B cell (primary cell): ENCODE measurements at regions of chr17 and their contacts with region 1.

Region 1: DNA sequence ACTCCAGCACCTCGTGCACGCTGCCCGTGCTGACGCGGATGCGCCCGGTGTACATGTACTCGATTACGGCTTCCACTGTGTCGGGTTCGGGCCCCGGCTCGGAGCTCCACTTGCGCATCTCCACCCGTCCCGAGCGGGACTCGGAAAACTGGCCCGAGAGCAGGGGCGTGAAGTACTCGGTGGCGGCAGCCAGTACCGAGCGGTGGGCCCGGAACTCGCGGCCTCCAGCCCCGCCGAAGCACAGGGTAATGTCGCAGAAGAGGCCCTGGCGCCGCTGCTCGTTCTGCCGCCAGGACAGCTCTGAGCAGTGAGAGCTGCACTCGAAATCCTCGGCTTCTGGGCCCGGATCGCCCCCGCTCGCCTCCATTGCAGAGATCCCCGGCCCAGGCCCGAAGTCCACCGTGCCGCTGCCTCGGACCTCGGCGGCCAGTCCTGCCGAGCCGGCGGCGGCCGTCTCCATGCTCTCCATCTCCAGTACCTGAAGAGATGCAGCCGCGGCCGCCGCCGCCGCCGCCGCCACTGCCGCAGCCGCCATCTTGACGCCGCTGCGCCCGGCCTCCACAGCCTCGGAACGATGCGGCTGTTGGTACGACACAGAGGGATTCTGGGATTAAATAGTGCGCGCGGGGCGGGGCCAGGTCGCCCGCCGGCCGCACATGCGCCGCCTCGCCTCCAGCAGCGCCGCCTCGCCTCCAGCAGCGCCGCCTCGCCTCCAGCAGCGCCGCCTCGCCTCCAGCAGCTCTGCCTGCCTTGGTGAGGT is at the start of gene KLHL11:
- DNase-seq: peak; percentile 93
- ATAC-seq: peak; percentile 97
- H3K4me3 ChIP-seq: peak within 1 kb of the TSS; percentile 45 to 96 (median 83)
- H3K4me3 Mint-ChIP-seq: no peak within 1 kb of the TSS
- H3K27ac ChIP-seq: peak within 1 kb of the TSS; percentile 72 to 82
- H3K27ac Mint-ChIP-seq: no peak within 1 kb of the TSS
- H3K4me1 ChIP-seq: peaks cover 24 to 27% of the 10 kb centered on the region in 2 donors
- H3K4me1 Mint-ChIP-seq: peaks cover 22% of the 10 kb centered on the region
- H3K27me3 ChIP-seq: no peaks in the 10 kb centered on the region
- H3K27me3 Mint-ChIP-seq: no peaks in the 10 kb centered on the region
- CTCF ChIP-seq: no peak
- total RNA-seq, gene KLHL11: 18.7 and 18.8 TPM in 2 replicates

Region 2: DNA sequence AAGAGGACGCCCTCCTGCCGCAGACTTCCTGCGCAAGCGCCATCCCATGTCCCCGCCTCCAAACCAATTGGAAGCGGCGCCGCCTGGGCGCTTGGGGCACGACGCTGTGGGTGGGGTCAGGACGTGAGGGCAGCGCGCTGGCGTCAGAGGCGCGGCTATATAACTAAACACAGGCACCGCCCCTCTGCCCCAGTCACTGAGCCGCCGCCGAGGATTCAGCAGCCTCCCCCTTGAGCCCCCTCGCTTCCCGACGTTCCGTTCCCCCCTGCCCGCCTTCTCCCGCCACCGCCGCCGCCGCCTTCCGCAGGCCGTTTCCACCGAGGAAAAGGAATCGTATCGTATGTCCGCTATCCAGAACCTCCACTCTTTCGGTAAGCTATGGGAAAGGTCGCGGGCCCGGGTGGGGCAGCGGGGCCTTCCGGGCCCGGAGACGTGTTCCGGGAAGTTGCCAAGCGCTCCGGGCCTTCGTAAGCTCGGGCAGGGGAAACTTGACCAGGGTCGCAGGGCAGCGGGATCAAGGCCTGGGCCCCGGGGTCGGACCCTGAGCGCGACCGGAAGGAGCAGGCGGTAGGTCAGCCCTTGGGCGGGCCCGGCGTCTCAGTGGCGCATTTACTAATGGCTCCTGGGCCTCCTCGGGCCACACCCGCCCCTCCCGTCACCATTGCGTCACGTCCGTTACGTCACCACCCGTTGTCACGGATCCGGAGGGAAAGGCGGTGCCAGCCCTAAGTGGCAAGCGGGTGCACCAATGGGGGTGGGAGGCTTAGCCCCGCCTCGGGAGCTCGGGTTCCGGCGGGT is 176.1 kb before region 1 on chr17 and contains the start of gene EIF1:
- CTCF ChIA-PET with region 1: no interaction called
- POLR2A ChIA-PET with region 1: interaction called, 13 read pairs
- intact Hi-C with region 1: no loop called
- DNase-seq: peak; percentile 100
- ATAC-seq: peak; percentile 75
- H3K4me3 ChIP-seq: peak within 1 kb of the TSS; percentile 81 to 99 (median 87)
- H3K4me3 Mint-ChIP-seq: peak within 1 kb of the TSS; percentile 96
- H3K27ac ChIP-seq: peak within 1 kb of the TSS; percentile 99
- H3K27ac Mint-ChIP-seq: peak within 1 kb of the TSS; percentile 100
- H3K4me1 ChIP-seq: peaks cover 22 to 27% of the 10 kb centered on the region in 2 donors
- H3K4me1 Mint-ChIP-seq: peaks cover 38% of the 10 kb centered on the region
- H3K27me3 ChIP-seq: no peaks in the 10 kb centered on the region
- H3K27me3 Mint-ChIP-seq: no peaks in the 10 kb centered on the region
- CTCF ChIP-seq: no peak
- total RNA-seq, gene EIF1: 753 and 773 TPM in 2 replicates

Region 3: GRCh38 chr17:41777574-41778188 is 87.3 kb before region 1 on chr17:
- CTCF ChIA-PET with region 1: no interaction called
- POLR2A ChIA-PET with region 1: no interaction called
- intact Hi-C with region 1: no loop called
- DNase-seq: no peak
- ATAC-seq: no peak
- H3K4me3 ChIP-seq: no peak overlapping the region
- H3K4me3 Mint-ChIP-seq: no peak overlapping the region
- H3K27ac ChIP-seq: no peak overlapping the region
- H3K27ac Mint-ChIP-seq: no peak overlapping the region
- H3K4me1 ChIP-seq: peaks cover 4 to 62% of the 10 kb centered on the region in 2 donors
- H3K4me1 Mint-ChIP-seq: peaks cover 21% of the 10 kb centered on the region
- H3K27me3 ChIP-seq: no peaks in the 10 kb centered on the region
- H3K27me3 Mint-ChIP-seq: no peaks in the 10 kb centered on the region
- CTCF ChIP-seq: no peak

Region 4: DNA sequence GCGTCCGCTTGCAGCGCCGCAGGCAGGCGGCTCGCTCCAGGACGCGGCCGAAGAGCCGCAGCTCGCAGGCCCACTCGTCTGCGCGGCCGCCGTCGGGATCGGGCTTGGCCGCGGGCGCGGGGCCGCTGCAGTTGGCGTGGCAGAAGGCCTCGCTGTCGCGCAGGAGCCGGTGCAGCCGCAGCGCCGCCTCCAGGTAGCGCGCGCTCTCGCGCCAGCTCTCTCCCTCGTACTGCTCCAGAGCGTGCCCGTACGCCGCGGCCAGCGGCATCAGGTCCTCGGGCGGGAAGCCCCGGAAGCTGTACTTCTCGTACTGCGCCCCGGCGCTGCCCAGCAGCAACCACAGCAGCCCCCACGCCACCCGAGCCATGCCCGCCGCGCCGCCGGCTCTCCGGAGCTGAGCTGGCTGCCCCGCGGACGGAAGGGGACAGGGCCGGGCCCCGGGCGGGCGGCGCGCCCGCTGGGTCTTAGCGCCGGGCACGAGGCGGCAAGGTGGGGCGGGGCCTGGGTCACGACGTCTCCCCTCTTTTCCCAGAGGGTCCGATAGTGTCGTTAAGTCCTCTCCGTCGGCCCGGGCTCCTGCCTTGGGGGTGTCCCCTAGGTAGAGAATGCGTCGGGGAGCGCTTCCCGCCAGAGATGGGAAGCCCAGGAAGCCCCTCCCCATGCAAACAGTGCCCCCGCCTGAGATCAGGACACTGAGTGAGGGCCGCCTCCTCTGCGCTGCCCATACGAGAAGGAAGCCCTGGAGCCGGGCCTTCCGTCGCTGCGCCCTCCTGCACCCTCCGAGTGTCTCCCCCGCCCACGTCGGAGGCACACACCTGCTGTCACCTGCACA is 53.3 kb before region 1 on chr17 and contains the start of gene P3H4:
- CTCF ChIA-PET with region 1: interaction called, 4 read pairs
- POLR2A ChIA-PET with region 1: no interaction called
- intact Hi-C with region 1: loop called (anchors 1 kb)
- DNase-seq: peak; percentile 88
- ATAC-seq: peak; percentile 91
- H3K4me3 ChIP-seq: peak within 1 kb of the TSS; percentile 23 to 85 (median 60)
- H3K4me3 Mint-ChIP-seq: peak within 1 kb of the TSS; percentile 96
- H3K27ac ChIP-seq: no peak within 1 kb of the TSS
- H3K27ac Mint-ChIP-seq: peak within 1 kb of the TSS; percentile 83
- H3K4me1 ChIP-seq: peaks cover 20% of the 10 kb centered on the region in 2 donors
- H3K4me1 Mint-ChIP-seq: peaks cover 19% of the 10 kb centered on the region
- H3K27me3 ChIP-seq: peaks cover 0 to 25% (median 5%) of the 10 kb centered on the region in 4 experiments
- H3K27me3 Mint-ChIP-seq: peaks cover 6% of the 10 kb centered on the region
- CTCF ChIP-seq: peak; percentile 82
- total RNA-seq, gene P3H4: 2.5 and 2.8 TPM in 2 replicates

Region 5: GRCh38 chr17:41835800-41836549 is 29.0 kb before region 1 on chr17 and contains the start of gene NT5C3B:
- CTCF ChIA-PET with region 1: interaction called, 3 read pairs
- POLR2A ChIA-PET with region 1: interaction called, 3 read pairs
- intact Hi-C with region 1: loop called (anchors 1 kb)
- DNase-seq: peak; percentile 72
- ATAC-seq: peak; percentile 86
- H3K4me3 ChIP-seq: peak within 1 kb of the TSS; percentile 21 to 80 (median 67)
- H3K4me3 Mint-ChIP-seq: peak within 1 kb of the TSS; percentile 92
- H3K27ac ChIP-seq: peak within 1 kb of the TSS in 1 of 2 donors; percentile 62
- H3K27ac Mint-ChIP-seq: peak within 1 kb of the TSS; percentile 85
- H3K4me1 ChIP-seq: peaks cover 12 to 14% of the 10 kb centered on the region in 2 donors
- H3K4me1 Mint-ChIP-seq: peaks cover 13% of the 10 kb centered on the region
- H3K27me3 ChIP-seq: peaks cover 0 to 13% (median 0%) of the 10 kb centered on the region in 4 experiments
- H3K27me3 Mint-ChIP-seq: no peaks in the 10 kb centered on the region
- CTCF ChIP-seq: no peak
- total RNA-seq, gene NT5C3B: 46.5 and 49.6 TPM in 2 replicates

Region 6: DNA sequence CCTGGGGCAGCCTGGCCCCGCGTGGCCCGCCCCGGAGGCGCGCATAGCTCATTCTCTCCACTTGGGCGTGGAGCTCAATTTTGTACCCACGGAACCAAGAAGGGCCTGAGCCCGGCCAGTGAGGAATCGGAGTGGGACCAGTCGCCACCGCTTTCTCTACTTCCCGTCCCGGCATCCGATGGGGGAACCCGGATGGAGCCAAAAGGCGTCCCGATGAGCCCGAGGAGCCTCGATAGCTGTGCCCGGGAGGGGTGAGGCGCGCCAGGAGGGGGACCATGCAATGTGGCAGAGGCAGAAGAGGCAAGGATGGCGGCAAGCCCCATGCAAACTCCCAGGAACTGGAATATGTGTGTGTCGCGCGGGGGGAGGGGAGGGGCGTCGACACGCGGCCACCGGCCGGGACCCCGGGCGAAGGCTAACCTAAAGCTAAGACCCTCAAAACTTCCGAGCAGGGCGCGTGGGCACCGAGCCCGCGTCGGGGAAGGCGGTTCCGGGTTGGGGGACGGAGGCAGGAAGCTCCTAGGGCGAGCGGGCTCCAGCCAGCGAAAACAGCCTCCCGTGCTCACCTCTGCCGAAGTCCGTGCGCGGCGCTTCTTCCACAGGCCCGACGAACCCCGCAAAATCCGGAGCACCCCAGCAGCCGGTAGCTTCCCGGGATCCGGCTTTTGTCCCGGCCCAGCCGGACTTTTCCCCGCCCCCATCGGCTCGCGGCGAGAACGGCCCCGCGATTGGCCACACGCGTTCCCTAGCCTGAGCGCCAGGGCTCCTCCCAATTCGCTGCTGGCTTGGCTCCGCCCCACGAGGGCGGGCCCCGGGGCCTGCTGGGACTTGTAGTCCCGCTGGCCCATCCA is 53.5 kb after region 1 on chr17 and contains the start of gene ACLY:
- CTCF ChIA-PET with region 1: no interaction called
- POLR2A ChIA-PET with region 1: no interaction called
- intact Hi-C with region 1: loop called (anchors 1 kb)
- DNase-seq: peak; percentile 95
- ATAC-seq: peak; percentile 99
- H3K4me3 ChIP-seq: peak within 1 kb of the TSS; percentile 78 to 99 (median 98)
- H3K4me3 Mint-ChIP-seq: peak within 1 kb of the TSS; percentile 91
- H3K27ac ChIP-seq: peak within 1 kb of the TSS; percentile 62 to 81
- H3K27ac Mint-ChIP-seq: peak within 1 kb of the TSS; percentile 89
- H3K4me1 ChIP-seq: peaks cover 15 to 21% of the 10 kb centered on the region in 2 donors
- H3K4me1 Mint-ChIP-seq: peaks cover 40% of the 10 kb centered on the region
- H3K27me3 ChIP-seq: no peaks in the 10 kb centered on the region
- H3K27me3 Mint-ChIP-seq: no peaks in the 10 kb centered on the region
- CTCF ChIP-seq: no peak
- total RNA-seq, gene ACLY: 85.3 and 91.5 TPM in 2 replicates

Region 7: DNA sequence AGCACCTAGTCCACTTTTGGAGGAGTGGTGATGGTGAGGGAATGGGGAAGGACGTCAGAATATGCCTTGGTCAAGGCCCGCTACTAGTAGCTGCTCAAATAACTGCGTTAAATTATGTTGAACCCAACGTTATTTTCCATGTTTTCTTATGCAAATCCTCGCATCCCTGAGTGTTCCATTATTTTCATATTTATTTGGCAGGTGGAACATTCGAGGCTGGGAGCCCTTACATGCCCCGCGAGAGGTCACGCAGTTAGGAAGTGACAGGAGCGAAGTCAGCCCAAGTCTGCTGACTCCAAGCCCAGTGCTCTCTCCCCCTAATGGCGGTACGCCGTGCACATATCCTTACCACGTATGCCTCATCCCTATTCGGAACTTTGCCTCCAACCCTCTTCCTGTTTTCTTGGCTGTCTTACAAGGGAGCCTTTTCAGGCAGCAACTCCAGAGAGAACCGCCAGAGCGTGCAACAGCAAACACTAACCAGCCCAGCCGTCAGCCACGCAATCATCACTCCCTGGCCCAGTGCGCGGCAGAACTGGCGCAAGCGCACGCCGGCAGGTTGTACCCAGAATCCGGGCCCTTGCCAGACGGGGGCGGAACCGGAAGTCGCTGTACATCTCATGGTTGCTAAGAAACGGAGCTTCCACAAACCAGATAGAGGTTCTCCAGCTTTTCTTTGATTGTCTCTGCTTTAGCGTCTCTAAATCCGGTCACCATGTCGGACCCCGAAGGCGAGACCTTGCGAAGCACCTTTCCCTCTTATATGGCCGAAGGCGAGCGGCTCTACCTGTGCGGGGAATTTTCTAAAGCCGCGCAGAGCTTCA is 65.2 kb after region 1 on chr17 and contains the start of gene ODAD4:
- CTCF ChIA-PET with region 1: no interaction called
- POLR2A ChIA-PET with region 1: interaction called, 14 read pairs
- intact Hi-C with region 1: loop called (anchors 1 kb)
- DNase-seq: peak; percentile 95
- ATAC-seq: peak; percentile 99
- H3K4me3 ChIP-seq: peak within 1 kb of the TSS; percentile 46 to 92 (median 81)
- H3K4me3 Mint-ChIP-seq: peak within 1 kb of the TSS; percentile 96
- H3K27ac ChIP-seq: peak within 1 kb of the TSS; percentile 60 to 83
- H3K27ac Mint-ChIP-seq: peak within 1 kb of the TSS; percentile 88
- H3K4me1 ChIP-seq: peaks cover 10 to 32% of the 10 kb centered on the region in 2 donors
- H3K4me1 Mint-ChIP-seq: peaks cover 30% of the 10 kb centered on the region
- H3K27me3 ChIP-seq: no peaks in the 10 kb centered on the region
- H3K27me3 Mint-ChIP-seq: no peaks in the 10 kb centered on the region
- CTCF ChIP-seq: no peak
- total RNA-seq, gene ODAD4: 0.27 and 0.56 TPM in 2 replicates